MCF 10A (cell line): ENCODE measurements at regions of chr19 and their contacts with region 1.

Region 1: DNA sequence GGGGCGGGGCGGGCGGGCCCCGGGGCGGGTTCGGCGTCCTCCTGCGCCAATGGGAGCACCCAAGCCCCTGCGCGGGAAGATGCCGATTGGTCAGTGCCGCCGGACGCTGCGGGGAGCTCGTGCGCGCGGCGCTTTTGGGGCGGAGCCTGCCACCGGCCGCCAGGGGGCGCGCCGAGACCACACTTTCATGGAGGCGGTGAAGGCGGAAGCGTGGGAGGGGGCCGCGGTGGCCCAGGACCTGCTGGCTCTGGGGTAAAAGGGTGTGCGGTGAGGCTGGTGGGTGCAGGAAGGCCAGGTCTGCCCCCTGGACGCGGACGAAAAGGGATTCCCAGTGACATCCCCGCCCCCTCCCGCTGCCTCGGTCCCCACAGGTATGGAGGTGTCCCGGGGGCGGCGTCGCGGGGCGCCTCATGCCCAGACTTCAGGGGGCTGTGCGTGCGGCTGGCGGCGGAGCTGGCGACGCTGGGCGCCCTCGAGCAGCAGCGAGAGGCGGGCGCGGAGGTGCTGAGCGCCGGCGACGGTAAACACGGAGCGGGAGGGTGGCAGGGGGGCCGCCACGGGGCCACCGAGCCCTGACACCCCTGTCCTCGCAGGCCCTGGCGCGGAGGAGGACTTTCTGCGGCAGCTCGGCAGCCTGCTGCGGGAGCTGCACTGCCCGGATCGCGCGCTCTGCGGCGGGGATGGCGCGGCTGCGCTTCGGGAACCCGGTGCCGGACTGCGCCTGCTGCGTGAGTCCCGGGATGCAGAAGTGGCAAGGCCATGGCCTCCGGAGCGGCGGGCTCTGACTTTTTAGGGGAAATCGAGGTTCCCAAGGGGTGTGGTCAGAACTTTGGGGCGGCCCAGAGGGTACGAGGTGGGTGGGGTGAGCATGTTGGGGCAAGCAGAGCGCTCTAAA is at the start of gene FAM98C:
- DNase-seq: peak; percentile 98
- H3K4me3 Mint-ChIP-seq: peak within 1 kb of the TSS; percentile 90
- H3K27ac Mint-ChIP-seq: peak within 1 kb of the TSS; percentile 95
- H3K4me1 Mint-ChIP-seq: no peaks in the 10 kb centered on the region
- H3K27me3 Mint-ChIP-seq: no peaks in the 10 kb centered on the region
- CTCF ChIP-seq: peak; percentile 96
- total RNA-seq, gene FAM98C: 18.8 and 19.9 TPM in 2 replicates

Region 2: DNA sequence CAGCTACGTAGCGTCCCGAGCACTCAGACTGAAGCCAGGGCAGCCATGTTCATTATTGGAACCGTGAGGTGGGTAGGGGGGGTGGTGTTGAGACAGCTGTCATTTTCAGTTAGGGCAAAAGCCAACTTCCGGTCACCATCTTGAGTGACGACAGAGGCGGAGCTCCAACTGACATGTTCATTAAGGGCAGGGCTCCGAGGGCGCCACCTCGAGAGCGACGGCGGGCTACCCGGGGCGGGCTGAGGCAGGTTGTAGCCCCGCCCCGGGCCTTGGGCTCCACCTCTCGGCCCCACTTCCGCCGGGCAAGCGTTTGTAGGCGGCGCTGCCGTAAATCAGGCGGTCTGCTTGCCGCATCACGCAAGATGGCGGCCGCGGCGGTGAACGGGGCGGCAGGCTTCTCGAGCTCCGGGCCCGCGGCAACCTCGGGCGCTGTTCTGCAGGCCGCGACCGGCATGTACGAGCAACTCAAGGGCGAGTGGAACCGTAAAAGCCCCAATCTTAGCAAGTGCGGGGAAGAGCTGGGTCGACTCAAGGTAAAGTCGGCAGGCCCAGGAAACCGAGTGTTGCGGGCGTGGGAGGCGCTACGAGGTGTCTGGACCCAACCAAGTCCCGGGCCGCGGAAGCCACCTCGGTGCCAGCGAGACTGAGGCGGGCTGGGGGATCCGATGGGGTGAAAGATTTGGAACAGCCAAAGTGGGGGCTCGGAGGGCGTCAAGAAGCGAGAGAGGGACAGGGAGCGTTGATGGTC is 28.6 kb before region 1 on chr19 and contains the start of gene PSMD8:
- CTCF ChIA-PET with region 1: interaction called, 8 read pairs
- POLR2A ChIA-PET with region 1: interaction called, 17 read pairs
- intact Hi-C with region 1: no loop called
- DNase-seq: peak; percentile 100
- H3K4me3 Mint-ChIP-seq: peak within 1 kb of the TSS; percentile 84
- H3K27ac Mint-ChIP-seq: peak within 1 kb of the TSS; percentile 98
- H3K4me1 Mint-ChIP-seq: peaks cover 19% of the 10 kb centered on the region
- H3K27me3 Mint-ChIP-seq: no peaks in the 10 kb centered on the region
- CTCF ChIP-seq: no peak
- total RNA-seq, gene PSMD8: 289 and 311 TPM in 2 replicates

Region 3: DNA sequence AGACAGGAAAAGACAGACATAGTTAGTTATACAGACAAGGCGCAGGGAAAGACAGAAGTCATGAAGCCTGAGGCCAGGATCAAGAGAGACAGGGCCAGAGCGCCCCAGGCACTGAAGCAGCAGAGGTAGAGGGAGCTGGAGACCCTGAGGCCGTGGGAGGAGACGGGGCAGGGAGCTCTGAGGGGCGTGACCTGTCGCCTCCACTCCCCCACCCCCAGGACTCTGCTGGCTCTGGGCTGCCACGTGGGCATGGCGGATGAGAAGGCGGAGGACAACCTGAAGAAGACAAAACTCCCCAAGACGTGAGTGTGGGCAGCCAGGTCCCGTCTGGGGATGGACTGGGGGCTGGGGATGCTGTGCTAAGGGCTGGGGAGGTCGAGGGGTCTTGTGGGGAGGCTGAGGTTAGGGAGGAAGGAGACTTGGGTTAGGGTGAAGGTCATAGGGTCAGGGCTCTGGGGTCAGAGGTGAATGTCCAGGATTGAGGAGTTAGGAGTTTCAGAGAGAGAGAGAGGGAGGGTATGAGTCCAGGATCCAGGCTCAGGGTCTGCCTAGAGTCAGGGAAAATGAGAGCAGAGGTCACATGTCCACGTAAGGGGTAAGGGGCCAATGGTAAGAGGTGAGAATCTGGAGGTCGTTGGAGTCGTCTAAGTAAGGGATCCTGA is 61.3 kb after region 1 on chr19:
- CTCF ChIA-PET with region 1: no interaction called
- POLR2A ChIA-PET with region 1: no interaction called
- intact Hi-C with region 1: no loop called
- DNase-seq: no peak
- H3K4me3 Mint-ChIP-seq: no peak overlapping the region
- H3K27ac Mint-ChIP-seq: no peak overlapping the region
- H3K4me1 Mint-ChIP-seq: no peaks in the 10 kb centered on the region
- H3K27me3 Mint-ChIP-seq: peaks cover 11% of the 10 kb centered on the region
- CTCF ChIP-seq: no peak

Region 4: DNA sequence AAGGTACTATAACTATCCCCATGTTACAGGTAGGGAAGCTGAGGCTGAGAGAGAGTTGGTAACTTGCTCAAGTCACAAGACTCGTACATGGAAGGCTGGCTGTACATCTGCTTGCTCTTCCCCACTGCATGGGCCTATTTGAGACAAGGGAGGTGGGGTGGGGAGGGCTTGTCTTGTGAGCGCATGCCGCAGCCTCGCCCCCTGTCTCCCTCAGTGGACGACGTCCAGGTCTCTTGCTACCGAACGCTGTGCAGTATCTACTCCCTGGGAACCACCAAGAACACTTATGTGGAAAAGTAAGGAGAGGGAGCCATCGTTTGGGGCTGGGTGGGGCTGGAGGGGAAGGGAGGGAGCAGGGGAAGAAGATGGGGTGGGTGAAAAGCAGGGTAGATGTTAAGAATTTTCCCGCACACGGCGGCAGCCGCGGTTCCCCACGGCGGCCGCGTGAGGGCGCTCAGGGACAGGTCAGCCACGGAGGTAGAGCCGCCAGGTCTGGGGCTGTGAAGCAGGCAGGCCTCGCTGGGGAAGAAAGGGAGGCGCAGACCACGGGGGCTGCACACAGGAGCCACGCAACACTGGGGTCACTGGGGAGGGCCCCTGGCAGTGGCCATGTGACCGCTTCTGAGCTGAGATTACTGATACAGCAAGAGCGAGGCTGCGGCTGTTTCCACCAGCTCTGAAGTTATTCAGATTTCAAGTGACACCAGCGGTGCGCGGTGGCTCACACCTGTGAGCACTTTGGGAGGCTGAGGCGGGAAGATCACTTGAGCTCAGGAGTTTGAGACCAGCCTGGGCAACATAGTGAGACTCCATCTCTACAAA is 111.8 kb after region 1 on chr19:
- CTCF ChIA-PET with region 1: interaction called, 15 read pairs
- POLR2A ChIA-PET with region 1: no interaction called
- intact Hi-C with region 1: no loop called
- DNase-seq: peak; percentile 65
- H3K4me3 Mint-ChIP-seq: no peak overlapping the region
- H3K27ac Mint-ChIP-seq: no peak overlapping the region
- H3K4me1 Mint-ChIP-seq: no peaks in the 10 kb centered on the region
- H3K27me3 Mint-ChIP-seq: peaks cover 22% of the 10 kb centered on the region
- CTCF ChIP-seq: peak; percentile 99

Region 5: GRCh38 chr19:38599722-38600121 is 196.5 kb after region 1 on chr19:
- CTCF ChIA-PET with region 1: no interaction called
- POLR2A ChIA-PET with region 1: no interaction called
- intact Hi-C with region 1: no loop called
- DNase-seq: no peak
- H3K4me3 Mint-ChIP-seq: no peak overlapping the region
- H3K27ac Mint-ChIP-seq: no peak overlapping the region
- H3K4me1 Mint-ChIP-seq: no peaks in the 10 kb centered on the region
- H3K27me3 Mint-ChIP-seq: no peaks in the 10 kb centered on the region
- CTCF ChIP-seq: no peak

Region 6: GRCh38 chr19:38891771-38892170 is 488.6 kb after region 1 on chr19:
- CTCF ChIA-PET with region 1: interaction called, 5 read pairs
- POLR2A ChIA-PET with region 1: no interaction called
- intact Hi-C with region 1: loop called (anchors 2 kb)
- DNase-seq: no peak
- H3K4me3 Mint-ChIP-seq: no peak overlapping the region
- H3K27ac Mint-ChIP-seq: no peak overlapping the region
- H3K4me1 Mint-ChIP-seq: no peaks in the 10 kb centered on the region
- H3K27me3 Mint-ChIP-seq: no peaks in the 10 kb centered on the region
- CTCF ChIP-seq: no peak

Region 7: GRCh38 chr19:38949580-38950367 is 546.6 kb after region 1 on chr19:
- CTCF ChIA-PET with region 1: interaction called, 7 read pairs
- POLR2A ChIA-PET with region 1: no interaction called
- intact Hi-C with region 1: loop called (anchors 2 kb)
- DNase-seq: no peak
- H3K4me3 Mint-ChIP-seq: no peak overlapping the region
- H3K27ac Mint-ChIP-seq: no peak overlapping the region
- H3K4me1 Mint-ChIP-seq: peaks cover 5% of the 10 kb centered on the region
- H3K27me3 Mint-ChIP-seq: no peaks in the 10 kb centered on the region
- CTCF ChIP-seq: no peak